Mammary epithelial cell (primary cell): ENCODE measurements at regions of chr12 and their contacts with region 1.

Region 1: DNA sequence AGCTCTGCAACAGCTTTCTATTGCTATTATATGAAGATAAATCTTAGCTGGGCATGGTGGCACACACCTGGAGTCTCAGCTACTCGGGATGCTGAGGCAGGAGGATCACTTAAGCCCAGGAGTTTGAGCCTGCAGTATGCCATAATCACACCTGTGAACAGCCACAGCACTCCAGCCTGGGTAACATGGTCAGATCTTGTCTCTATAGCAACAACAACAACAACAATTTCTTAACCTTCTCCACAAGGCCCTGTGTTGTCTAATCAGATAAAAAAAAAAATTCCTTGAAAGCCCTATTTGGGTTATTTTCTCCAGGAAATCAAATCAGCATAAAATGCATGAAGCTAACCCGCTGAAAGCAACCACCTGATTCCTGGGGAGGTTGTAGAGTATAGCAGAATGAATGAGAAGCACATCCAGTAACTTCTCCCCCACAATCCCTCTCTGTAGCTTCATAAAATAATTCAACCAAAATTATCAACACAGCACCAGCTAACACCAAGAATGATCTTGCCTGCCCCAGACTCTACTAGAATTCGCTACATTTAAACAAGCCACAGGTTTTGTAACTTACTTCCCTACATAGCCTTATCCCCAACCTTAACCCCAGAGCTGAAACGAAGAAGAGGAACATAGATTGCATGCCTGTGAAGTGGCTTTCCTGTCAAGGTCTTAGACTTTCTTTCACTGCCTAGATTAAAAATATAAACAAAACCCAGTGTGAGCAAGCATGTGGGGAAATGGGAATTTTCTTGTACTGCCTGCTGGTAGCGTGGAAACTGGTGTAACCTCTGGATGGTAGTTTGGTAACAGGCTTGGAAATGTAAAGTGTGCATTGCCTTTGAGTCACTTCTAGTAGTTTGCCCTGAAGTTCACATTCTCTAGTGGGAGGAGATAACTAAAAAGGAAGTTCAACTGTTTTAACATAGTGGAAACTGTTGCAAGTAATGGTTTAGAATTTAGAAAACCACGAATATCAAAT is 6.0 kb upstream of the STK38L start:
- DNase-seq: no peak
- H3K4me3 ChIP-seq: no peak overlapping the region
- H3K27ac ChIP-seq: no peak overlapping the region
- H3K4me1 ChIP-seq: no peaks in the 10 kb centered on the region
- H3K27me3 ChIP-seq: no peaks in the 10 kb centered on the region
- CTCF ChIP-seq: no peak

Region 2: GRCh38 chr12:27297566-27297965 is 59.5 kb after region 1 on chr12:
- CTCF ChIA-PET with region 1: no interaction called
- dilution Hi-C with region 1: loop called (anchors 5 kb)
- in situ Hi-C with region 1: no loop called
- intact Hi-C with region 1: no loop called
- DNase-seq: no peak
- H3K4me3 ChIP-seq: no peak overlapping the region
- H3K27ac ChIP-seq: no peak overlapping the region
- H3K4me1 ChIP-seq: no peaks in the 10 kb centered on the region
- H3K27me3 ChIP-seq: no peaks in the 10 kb centered on the region
- CTCF ChIP-seq: no peak